CD14-positive monocyte (primary cell): ENCODE measurements at regions of chr2 and their contacts with region 1.

Region 1: DNA sequence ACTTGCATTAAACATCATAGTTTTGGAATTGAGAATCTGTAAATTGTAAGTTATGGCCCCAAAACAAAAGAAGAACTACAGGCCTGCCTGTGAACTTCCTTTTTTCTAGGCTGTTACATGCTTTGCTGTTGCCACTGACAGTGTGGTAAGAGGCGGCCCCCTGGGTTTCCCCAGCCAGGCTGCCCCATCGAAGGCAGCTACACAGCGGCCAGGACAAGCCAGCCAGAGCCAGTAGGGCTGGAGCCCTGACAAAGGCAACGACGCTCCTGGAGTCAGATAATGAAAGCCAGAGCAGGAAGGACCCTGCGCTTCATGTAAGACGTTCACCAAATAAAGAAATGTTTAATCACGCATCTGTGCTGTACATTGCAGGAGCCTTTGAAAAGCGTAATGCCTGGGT is 55.0 kb downstream of the ANKRD44 start:
- DNase-seq: peak; percentile 90 to 96 (median 93)
- H3K4me3 ChIP-seq: peak overlapping the region; percentile 24 to 68 (median 50)
- H3K4me3 Mint-ChIP-seq: peak overlapping the region; percentile 68 to 89
- H3K27ac ChIP-seq: peak overlapping the region; percentile 89 to 95
- H3K27ac Mint-ChIP-seq: peak overlapping the region; percentile 98 to 100 (median 99)
- H3K4me1 ChIP-seq: peaks cover 60 to 67% of the 10 kb centered on the region in 2 donors
- H3K4me1 Mint-ChIP-seq: peaks cover 64% of the 10 kb centered on the region
- H3K27me3 ChIP-seq: no peaks in the 10 kb centered on the region
- H3K27me3 Mint-ChIP-seq: peaks cover 0 to 2% (median 0%) of the 10 kb centered on the region in 3 donors
- CTCF ChIP-seq: no peak

Region 2: GRCh38 chr2:197209742-197210408 is 45.7 kb before region 1 on chr2:
- intact Hi-C with region 1: loop called (anchors 5 to 10 kb)
- DNase-seq: no peak
- H3K4me3 ChIP-seq: peak overlapping the region in 1 of 3 experiments; percentile 9
- H3K4me3 Mint-ChIP-seq: peak overlapping the region in 1 of 2 donors; percentile 9
- H3K27ac ChIP-seq: peak overlapping the region; percentile 45 to 75
- H3K27ac Mint-ChIP-seq: peak overlapping the region; percentile 30 to 92 (median 80)
- H3K4me1 ChIP-seq: peaks cover 92 to 98% of the 10 kb centered on the region in 2 donors
- H3K4me1 Mint-ChIP-seq: peaks cover 97% of the 10 kb centered on the region
- H3K27me3 ChIP-seq: no peaks in the 10 kb centered on the region
- H3K27me3 Mint-ChIP-seq: no peaks in the 10 kb centered on the region
- CTCF ChIP-seq: no peak

Region 3: GRCh38 chr2:197239434-197239833 is 16.1 kb before region 1 on chr2:
- intact Hi-C with region 1: loop called in 1 of 2 experiments (anchors 2 kb)
- DNase-seq: peak; percentile 49 to 81 (median 55)
- H3K4me3 ChIP-seq: peak overlapping the region in 2 of 3 experiments; percentile 47 to 70
- H3K4me3 Mint-ChIP-seq: peak overlapping the region; percentile 78 to 84
- H3K27ac ChIP-seq: peak overlapping the region; percentile 86
- H3K27ac Mint-ChIP-seq: peak overlapping the region; percentile 87 to 98 (median 96)
- H3K4me1 ChIP-seq: peaks cover 54 to 79% of the 10 kb centered on the region in 2 donors
- H3K4me1 Mint-ChIP-seq: peaks cover 79% of the 10 kb centered on the region
- H3K27me3 ChIP-seq: no peaks in the 10 kb centered on the region
- H3K27me3 Mint-ChIP-seq: no peaks in the 10 kb centered on the region
- CTCF ChIP-seq: no peak

Region 4: GRCh38 chr2:197293252-197294007 is 37.9 kb after region 1 on chr2:
- intact Hi-C with region 1: loop called in 1 of 2 experiments (anchors 5 kb)
- DNase-seq: peak; percentile 54 to 73 (median 68)
- H3K4me3 ChIP-seq: peak overlapping the region in 1 of 3 experiments; percentile 19
- H3K4me3 Mint-ChIP-seq: peak overlapping the region in 1 of 2 donors; percentile 32
- H3K27ac ChIP-seq: peak overlapping the region in 1 of 2 donors; percentile 81
- H3K27ac Mint-ChIP-seq: peak overlapping the region; percentile 74 to 93 (median 85)
- H3K4me1 ChIP-seq: peaks cover 51 to 63% of the 10 kb centered on the region in 2 donors
- H3K4me1 Mint-ChIP-seq: peaks cover 76% of the 10 kb centered on the region
- H3K27me3 ChIP-seq: no peaks in the 10 kb centered on the region
- H3K27me3 Mint-ChIP-seq: peaks cover 0 to 3% (median 0%) of the 10 kb centered on the region in 3 donors
- CTCF ChIP-seq: no peak